MCF 10A (cell line): ENCODE measurements at regions of chr7 and their contacts with region 1.

Region 1: DNA sequence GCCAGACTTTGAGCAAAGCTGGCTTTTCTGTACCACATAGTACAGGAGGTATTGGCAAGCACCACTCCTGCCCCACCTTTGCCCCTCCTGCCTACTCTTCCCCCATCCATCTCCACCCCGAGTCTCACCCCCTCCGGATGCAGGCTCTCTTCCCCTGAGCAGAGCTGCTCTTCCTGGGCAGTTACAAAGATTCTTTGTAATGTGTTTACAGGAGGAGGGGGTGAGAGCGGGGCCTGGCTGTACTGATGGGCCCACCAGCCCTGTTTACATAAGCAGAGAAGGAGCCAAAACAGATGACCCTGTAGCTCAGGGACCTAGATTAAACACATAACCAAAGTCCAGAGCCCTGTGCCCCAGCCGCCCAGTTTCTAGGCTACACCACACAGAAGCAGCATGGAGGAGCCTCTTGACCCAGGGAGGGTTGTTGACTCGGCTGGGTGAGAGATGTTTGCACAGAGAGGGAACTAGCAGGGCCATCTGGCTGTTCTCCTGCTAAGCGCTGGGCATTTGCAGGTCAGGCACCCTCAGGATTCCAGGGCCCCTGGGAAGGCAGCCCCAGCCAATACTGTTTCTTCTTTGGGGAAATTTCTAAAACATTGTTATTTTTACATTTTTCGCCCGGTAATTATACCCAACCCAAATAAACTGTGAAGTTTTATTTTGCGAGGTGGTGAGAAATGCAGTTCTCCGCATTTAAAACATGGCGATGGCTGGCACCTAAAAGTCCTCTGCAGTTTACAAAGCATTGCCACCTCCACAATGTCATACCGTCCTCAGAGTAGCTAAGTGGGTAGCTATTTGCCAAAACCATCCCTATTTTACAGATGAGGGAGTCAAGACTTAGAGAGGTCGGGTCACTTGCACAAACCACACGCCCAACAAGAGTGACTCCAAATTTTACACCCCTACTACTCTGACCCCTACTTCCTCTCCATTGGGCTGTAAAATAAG is 11.4 kb upstream of the ZKSCAN1 start:
- DNase-seq: no peak
- H3K4me3 Mint-ChIP-seq: no peak overlapping the region
- H3K27ac Mint-ChIP-seq: no peak overlapping the region
- H3K4me1 Mint-ChIP-seq: no peaks in the 10 kb centered on the region
- H3K27me3 Mint-ChIP-seq: no peaks in the 10 kb centered on the region
- CTCF ChIP-seq: no peak

Region 2: DNA sequence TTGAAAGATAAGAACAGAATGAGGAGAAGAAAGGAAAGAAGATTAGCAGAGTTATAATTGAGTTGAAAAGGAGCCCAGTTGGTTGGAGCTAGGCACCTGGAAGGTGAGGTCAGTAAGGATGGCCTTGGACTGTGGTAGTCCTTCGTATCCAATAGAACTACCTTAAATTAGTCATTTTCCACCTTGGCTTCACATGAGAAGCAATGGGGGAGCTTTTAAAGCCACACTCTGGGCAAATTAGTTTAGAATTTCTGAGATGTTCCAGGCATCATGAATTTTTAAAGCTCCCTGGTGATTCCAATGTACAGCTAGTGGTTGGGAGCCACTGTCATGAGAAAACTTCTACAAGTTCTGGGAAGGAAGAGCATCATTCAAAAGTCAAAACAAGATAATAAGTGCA is 296.9 kb before region 1 on chr7:
- CTCF ChIA-PET with region 1: no interaction called
- POLR2A ChIA-PET with region 1: no interaction called
- intact Hi-C with region 1: no loop called
- DNase-seq: no peak
- H3K4me3 Mint-ChIP-seq: no peak overlapping the region
- H3K27ac Mint-ChIP-seq: no peak overlapping the region
- H3K4me1 Mint-ChIP-seq: peaks cover 6% of the 10 kb centered on the region
- H3K27me3 Mint-ChIP-seq: no peaks in the 10 kb centered on the region
- CTCF ChIP-seq: no peak

Region 3: DNA sequence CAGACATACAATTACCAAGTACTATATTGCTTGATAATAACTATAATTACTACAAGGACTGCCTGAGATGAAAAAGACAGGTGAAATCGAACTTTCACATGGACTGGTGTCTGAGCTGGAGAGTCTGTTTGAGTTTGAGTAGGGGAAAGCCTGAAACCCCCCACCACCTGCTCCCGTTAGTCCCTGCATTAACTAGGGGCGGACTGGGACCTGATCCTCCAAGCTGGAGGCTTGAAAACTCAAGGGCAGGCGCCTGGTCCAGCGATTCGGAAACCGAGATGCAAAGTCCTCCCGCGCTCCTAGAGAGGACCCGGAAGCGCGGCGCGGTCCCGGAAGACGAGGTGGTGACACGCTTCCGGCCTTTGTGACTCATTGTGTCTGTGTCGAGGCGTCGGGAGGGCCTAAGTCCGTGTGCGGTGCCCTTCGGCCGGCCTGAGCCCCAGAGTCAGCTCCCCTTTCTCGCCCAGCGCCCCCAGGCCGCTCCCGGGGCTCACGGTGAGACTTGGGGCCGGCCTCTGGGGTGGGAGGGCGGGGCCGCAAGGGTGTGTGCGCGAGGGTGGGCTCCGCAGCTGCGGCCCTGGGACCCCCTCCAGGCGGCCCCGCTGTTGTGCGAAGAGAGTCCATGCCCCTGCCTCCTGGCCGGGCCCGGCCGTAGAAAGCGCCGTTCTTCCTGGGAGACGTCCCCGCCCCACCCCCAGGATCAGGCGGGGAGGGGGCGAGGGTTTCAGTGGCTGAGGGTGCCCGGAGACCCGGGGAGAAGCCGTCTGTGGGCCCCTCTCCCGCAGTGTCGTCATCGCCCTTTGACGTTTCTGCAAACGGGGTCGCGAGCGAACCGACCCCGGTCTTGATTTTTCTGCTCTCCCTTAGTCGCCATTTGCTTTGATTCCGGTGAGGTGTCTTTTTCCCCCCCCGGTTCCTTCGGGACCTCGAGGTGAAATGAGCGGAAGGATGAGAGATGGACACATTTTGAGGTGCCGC is 11.5 kb after region 1 on chr7 and contains the start of gene ZKSCAN1:
- CTCF ChIA-PET with region 1: no interaction called
- POLR2A ChIA-PET with region 1: interaction called, 16 read pairs
- intact Hi-C with region 1: no loop called
- DNase-seq: peak; percentile 95
- H3K4me3 Mint-ChIP-seq: peak within 1 kb of the TSS; percentile 80
- H3K27ac Mint-ChIP-seq: peak within 1 kb of the TSS; percentile 76
- H3K4me1 Mint-ChIP-seq: peaks cover 12% of the 10 kb centered on the region
- H3K27me3 Mint-ChIP-seq: no peaks in the 10 kb centered on the region
- CTCF ChIP-seq: no peak
- total RNA-seq, gene ZKSCAN1: 80.2 and 86.2 TPM in 2 replicates

Region 4: DNA sequence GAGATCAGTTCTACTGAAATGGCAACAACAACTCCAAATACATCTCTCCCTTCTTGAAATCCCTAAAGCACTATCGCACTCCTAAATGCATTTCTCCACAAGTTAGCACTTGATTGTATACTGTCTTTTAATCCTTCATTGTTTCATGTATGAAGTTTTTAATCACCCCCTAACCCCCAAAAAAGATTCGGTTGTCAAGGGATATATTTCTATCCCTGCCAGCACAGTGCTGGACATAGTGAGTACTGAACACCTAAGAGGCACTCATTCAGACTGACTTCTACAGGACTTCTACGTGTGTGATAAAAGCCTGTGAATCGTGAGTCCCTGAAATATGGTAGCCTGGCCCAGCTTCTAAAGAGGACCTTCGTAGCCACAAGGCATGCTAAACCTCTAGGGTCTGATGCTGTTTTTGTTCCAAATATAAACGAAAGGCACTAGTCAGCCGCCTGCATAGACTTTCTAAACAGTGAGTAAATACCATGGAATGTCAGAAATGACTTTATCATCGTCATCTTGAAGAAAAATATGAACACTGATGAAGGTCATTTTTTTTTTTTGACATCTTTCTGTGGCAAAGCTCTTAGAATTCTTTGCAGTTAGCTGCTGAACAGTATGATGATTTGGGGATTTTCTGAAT is 31.0 kb after region 1 on chr7:
- CTCF ChIA-PET with region 1: no interaction called
- POLR2A ChIA-PET with region 1: no interaction called
- intact Hi-C with region 1: no loop called
- DNase-seq: peak; percentile 36
- H3K4me3 Mint-ChIP-seq: no peak overlapping the region
- H3K27ac Mint-ChIP-seq: no peak overlapping the region
- H3K4me1 Mint-ChIP-seq: peaks cover 8% of the 10 kb centered on the region
- H3K27me3 Mint-ChIP-seq: no peaks in the 10 kb centered on the region
- CTCF ChIP-seq: no peak

Region 5: GRCh38 chr7:101558742-101559325 is 1554.8 kb after region 1 on chr7:
- CTCF ChIA-PET with region 1: no interaction called
- POLR2A ChIA-PET with region 1: no interaction called
- intact Hi-C with region 1: no loop called
- DNase-seq: no peak
- H3K4me3 Mint-ChIP-seq: no peak overlapping the region
- H3K27ac Mint-ChIP-seq: no peak overlapping the region
- H3K4me1 Mint-ChIP-seq: no peaks in the 10 kb centered on the region
- H3K27me3 Mint-ChIP-seq: peaks cover 68% of the 10 kb centered on the region
- CTCF ChIP-seq: no peak